B cell (primary cell): ENCODE measurements at regions of chr13 and their contacts with region 1.

Region 1: DNA sequence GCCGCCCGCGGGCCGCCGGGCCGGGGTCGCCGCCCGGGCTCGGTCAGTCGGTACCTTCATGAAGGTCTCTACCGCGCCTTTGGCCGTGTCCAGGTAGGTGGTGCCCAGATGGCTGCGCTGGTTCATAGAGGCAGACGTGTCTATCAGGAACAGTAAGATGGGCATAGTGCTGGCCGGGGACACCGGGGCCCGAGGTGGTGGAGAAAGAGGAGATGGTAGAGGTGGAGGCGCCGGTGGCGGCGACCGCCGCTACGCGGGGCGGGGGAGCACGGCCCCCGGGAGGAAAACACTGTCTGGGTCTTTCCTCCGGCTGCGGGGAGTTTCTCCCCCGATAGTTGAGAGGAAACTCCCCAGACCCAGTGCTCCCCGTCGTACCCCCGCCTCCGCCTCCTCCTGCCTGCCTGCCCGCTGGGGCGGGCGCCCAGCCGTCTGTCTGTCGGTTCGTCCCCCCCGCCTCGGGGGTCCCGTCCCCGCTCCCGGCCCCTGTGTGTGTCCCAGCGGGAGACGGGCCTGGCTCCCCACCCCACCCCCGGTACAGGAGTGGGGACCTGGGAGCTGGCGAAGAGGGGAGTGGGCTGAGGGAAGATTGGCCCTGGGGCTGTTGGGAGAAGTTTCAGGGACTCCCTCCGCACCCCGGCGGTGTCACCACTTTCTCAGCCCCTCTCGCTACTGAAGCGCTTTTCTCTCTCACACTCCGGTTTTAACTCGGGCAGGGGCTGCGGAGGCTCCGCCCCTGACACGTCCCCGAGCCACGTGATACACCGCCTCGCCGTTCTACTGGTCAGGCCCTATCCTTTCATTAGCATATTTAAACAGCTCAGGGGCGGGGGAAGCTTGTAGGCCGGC is at the start of gene INTS6:
- DNase-seq: peak; percentile 100
- ATAC-seq: peak; percentile 73
- H3K4me3 ChIP-seq: peak within 1 kb of the TSS; percentile 81 to 93 (median 87)
- H3K4me3 Mint-ChIP-seq: peak within 1 kb of the TSS; percentile 95
- H3K27ac ChIP-seq: peak within 1 kb of the TSS; percentile 95 to 98
- H3K27ac Mint-ChIP-seq: peak within 1 kb of the TSS; percentile 97
- H3K4me1 ChIP-seq: peaks cover 25 to 28% of the 10 kb centered on the region in 2 donors
- H3K4me1 Mint-ChIP-seq: peaks cover 48% of the 10 kb centered on the region
- H3K27me3 ChIP-seq: no peaks in the 10 kb centered on the region
- H3K27me3 Mint-ChIP-seq: no peaks in the 10 kb centered on the region
- CTCF ChIP-seq: no peak
- total RNA-seq, gene INTS6: 74.7 TPM in 2 replicates

Region 2: DNA sequence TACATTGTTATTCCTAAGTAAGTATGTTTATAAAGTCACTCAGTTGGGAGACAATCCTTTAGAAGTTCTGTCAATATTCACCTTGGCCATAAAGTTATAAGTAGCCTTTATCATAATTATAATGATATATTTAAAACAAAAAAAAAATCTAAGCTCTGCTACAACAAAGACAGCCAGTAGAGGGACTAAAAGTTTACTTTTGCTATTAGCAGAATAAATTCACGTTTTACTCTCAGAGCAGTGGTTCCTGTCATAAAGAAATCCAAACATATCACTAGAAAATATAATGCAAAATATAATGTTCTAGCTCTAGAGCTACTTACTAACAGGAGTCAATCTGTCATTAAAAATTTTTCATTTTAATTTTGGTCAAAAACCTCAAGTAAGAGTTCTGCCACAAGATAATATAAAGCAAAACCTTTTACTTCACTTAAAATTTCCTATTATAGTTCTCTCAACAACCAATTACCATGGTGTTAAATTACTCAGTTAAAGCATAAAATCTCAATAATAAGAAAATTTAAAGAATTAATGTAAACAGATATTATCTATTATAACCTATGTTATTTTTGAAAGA is 17.5 kb before region 1 on chr13:
- CTCF ChIA-PET with region 1: interaction called, 14 read pairs
- POLR2A ChIA-PET with region 1: interaction called, 3 read pairs
- intact Hi-C with region 1: no loop called
- DNase-seq: peak; percentile 50
- ATAC-seq: no peak
- H3K4me3 ChIP-seq: no peak overlapping the region
- H3K4me3 Mint-ChIP-seq: no peak overlapping the region
- H3K27ac ChIP-seq: no peak overlapping the region
- H3K27ac Mint-ChIP-seq: no peak overlapping the region
- H3K4me1 ChIP-seq: no peaks in the 10 kb centered on the region
- H3K4me1 Mint-ChIP-seq: peaks cover 7% of the 10 kb centered on the region
- H3K27me3 ChIP-seq: no peaks in the 10 kb centered on the region
- H3K27me3 Mint-ChIP-seq: no peaks in the 10 kb centered on the region
- CTCF ChIP-seq: peak; percentile 86

Region 3: GRCh38 chr13:51645154-51645650 is 192.6 kb after region 1 on chr13:
- CTCF ChIA-PET with region 1: no interaction called
- POLR2A ChIA-PET with region 1: no interaction called
- intact Hi-C with region 1: loop called (anchors 1 kb)
- DNase-seq: peak; percentile 79
- ATAC-seq: peak; percentile 79
- H3K4me3 ChIP-seq: peak overlapping the region in 2 of 5 experiments; percentile 16 to 42
- H3K4me3 Mint-ChIP-seq: peak overlapping the region; percentile 70
- H3K27ac ChIP-seq: peak overlapping the region; percentile 83 to 91
- H3K27ac Mint-ChIP-seq: peak overlapping the region; percentile 88
- H3K4me1 ChIP-seq: peaks cover 39 to 42% of the 10 kb centered on the region in 2 donors
- H3K4me1 Mint-ChIP-seq: peaks cover 60% of the 10 kb centered on the region
- H3K27me3 ChIP-seq: no peaks in the 10 kb centered on the region
- H3K27me3 Mint-ChIP-seq: no peaks in the 10 kb centered on the region
- CTCF ChIP-seq: no peak

Region 4: DNA sequence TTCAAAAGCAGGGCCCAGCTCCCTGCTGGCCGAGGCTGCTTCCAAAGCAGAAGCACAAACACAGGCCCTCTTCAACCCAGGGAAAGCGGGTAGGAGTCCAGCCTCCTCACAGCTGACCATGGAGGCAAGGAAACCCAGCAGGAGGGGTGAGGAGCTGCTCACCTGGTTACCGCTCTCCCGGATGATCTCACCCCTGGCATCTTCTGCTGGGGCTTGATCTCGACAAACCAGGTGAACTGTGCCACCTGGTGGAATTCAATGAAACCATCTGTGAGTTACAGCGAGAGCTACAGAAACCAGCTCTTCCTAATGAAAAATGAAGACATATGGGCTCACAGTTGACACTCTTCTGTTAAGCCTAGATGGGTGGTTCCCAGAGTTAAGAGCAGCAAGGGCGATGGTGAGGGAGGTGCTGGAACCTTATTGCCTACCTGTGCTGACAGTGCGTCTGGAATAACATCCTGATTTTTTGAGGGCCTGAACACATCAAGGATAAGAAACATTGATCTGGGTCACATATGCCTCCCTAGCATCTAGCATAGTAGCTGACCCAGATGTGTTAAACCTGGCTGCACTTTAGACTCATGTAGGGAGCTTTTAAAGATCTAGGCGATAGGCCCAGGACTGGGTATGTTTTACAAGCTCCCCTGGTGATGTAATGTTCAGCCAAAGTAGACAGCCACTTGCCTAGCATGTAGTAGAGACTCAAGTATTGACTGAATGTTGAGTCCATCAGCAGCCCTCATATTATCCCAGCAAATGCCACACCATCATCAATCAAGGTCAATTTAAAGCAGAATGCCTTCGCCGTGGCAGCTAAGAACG is 345.3 kb after region 1 on chr13:
- CTCF ChIA-PET with region 1: interaction called, 18 read pairs
- POLR2A ChIA-PET with region 1: interaction called, 12 read pairs
- intact Hi-C with region 1: loop called (anchors 1 kb)
- DNase-seq: peak; percentile 76
- ATAC-seq: peak; percentile 60
- H3K4me3 ChIP-seq: no peak overlapping the region
- H3K4me3 Mint-ChIP-seq: no peak overlapping the region
- H3K27ac ChIP-seq: no peak overlapping the region
- H3K27ac Mint-ChIP-seq: peak overlapping the region; percentile 5
- H3K4me1 ChIP-seq: peaks cover 37 to 39% of the 10 kb centered on the region in 2 donors
- H3K4me1 Mint-ChIP-seq: peaks cover 45% of the 10 kb centered on the region
- H3K27me3 ChIP-seq: no peaks in the 10 kb centered on the region
- H3K27me3 Mint-ChIP-seq: no peaks in the 10 kb centered on the region
- CTCF ChIP-seq: peak; percentile 68

Region 5: GRCh38 chr13:51825165-51825592 is 372.6 kb after region 1 on chr13:
- CTCF ChIA-PET with region 1: interaction called, 3 read pairs
- POLR2A ChIA-PET with region 1: interaction called, 15 read pairs
- intact Hi-C with region 1: no loop called
- DNase-seq: no peak
- ATAC-seq: no peak
- H3K4me3 ChIP-seq: peak overlapping the region in 1 of 5 experiments; percentile 1
- H3K4me3 Mint-ChIP-seq: peak overlapping the region; percentile 62
- H3K27ac ChIP-seq: peak overlapping the region in 1 of 2 donors; percentile 19
- H3K27ac Mint-ChIP-seq: peak overlapping the region; percentile 64
- H3K4me1 ChIP-seq: peaks cover 73 to 76% of the 10 kb centered on the region in 2 donors
- H3K4me1 Mint-ChIP-seq: peaks cover 79% of the 10 kb centered on the region
- H3K27me3 ChIP-seq: no peaks in the 10 kb centered on the region
- H3K27me3 Mint-ChIP-seq: peaks cover 4% of the 10 kb centered on the region
- CTCF ChIP-seq: no peak